GM18951 (cell line): ENCODE measurements at regions of chr7 and their contacts with region 1.

Region 1: GRCh38 chr7:20778063-20778721 is 8.5 kb downstream of the SP8 start:
- POLR2A ChIP-seq: no peak

Region 2: GRCh38 chr7:21243265-21243664 is 465.1 kb after region 1 on chr7:
- in situ Hi-C with region 1: loop called (anchors 10 kb)
- POLR2A ChIP-seq: no peak

Region 3: DNA sequence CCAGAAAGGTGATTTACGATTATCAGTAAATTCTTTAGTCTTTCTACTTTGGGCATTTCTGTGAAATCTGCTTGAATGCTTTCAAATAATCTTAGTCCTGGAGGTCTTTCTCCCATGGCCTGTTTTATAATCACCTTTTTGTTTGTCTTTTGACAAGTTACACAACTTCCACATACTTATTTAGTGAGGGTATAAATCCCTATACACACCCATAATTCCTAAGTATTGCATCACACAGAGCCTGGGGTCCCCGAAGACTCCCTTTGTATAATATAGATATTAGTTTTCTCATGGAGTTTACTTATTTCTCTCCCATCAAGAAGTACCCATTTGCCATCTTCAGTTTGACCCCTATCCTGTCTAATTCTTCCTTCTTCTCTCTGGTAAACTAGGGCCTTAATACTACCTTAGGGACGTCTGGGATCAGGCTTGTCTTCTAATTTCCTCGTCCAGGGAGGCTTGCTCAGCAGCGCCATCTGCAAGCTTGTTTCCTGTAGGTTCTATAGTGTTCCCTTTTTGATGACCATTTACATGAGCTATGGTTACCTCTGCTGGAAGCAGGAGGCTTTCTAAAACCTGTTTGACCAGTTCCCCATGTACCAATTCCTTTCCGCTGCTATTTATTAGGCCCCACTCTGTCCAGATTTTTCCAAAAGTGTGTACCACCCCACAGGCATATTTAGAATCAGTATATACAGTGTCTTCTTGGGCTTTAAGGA is 772.8 kb after region 1 on chr7:
- in situ Hi-C with region 1: loop called (anchors 10 kb)
- POLR2A ChIP-seq: no peak